Heart right ventricle (tissue), 16 donors: ENCODE measurements at regions of chr7 and their contacts with region 1.

Region 1: DNA sequence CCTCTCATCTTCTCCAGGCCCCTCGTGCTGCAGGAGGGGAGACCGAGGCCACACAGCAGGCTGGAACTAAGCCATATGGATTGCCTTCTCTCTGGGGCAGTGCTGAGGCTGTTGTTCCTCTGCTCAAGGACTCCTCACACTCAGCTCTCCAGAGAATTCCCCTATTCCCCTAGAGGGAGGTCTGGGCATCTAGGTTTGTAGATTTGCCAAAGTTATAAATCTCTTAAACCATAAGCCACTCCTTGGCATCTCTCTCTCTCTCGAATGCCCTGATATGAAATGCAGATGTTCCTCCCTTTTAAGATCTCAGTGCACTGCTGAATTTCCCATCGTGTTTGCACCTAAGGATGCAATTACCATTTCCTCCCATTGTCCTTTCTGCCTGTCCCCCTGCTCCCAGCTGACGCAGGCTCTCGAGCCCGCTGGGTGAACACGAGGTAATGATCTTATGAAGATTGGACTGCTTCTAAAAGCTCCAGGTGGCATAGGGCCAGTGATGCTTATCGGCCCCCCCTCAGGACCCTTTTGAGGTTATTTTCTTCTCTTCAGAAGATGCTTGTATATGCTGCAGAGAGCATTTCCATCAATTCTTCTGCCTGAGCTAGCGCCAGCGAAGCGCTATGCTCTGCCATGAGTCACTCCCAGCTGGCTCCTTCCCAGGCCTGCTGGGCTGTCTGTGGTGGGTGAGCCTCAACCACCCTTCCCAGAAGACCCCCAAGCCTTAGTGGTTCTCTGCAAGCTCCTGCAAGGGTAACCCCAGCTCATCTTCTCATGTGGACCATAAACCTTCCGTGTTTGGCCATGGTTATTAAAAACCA is 41.6 kb upstream of the AQP1 start:
- DNase-seq: peak; percentile 54 to 75
- ATAC-seq: peak; percentile 47 to 82 (median 76)
- H3K4me3 ChIP-seq: no peak overlapping the region
- H3K27ac ChIP-seq: peak overlapping the region in 9 of 10 donors; percentile 39 to 71 (median 62)
- H3K4me1 ChIP-seq: peaks cover 10 to 78% (median 40%) of the 10 kb centered on the region in 9 donors
- H3K27me3 ChIP-seq: no peaks in the 10 kb centered on the region
- CTCF ChIP-seq: no peak

Region 2: GRCh38 chr7:30585675-30586074 is 284.3 kb before region 1 on chr7:
- intact Hi-C with region 1: no loop called
- DNase-seq: no peak
- ATAC-seq: no peak
- H3K4me3 ChIP-seq: no peak overlapping the region
- H3K27ac ChIP-seq: no peak overlapping the region
- H3K4me1 ChIP-seq: peaks cover 0 to 8% (median 0%) of the 10 kb centered on the region in 9 donors
- H3K27me3 ChIP-seq: no peaks in the 10 kb centered on the region
- CTCF ChIP-seq: no peak

Region 3: DNA sequence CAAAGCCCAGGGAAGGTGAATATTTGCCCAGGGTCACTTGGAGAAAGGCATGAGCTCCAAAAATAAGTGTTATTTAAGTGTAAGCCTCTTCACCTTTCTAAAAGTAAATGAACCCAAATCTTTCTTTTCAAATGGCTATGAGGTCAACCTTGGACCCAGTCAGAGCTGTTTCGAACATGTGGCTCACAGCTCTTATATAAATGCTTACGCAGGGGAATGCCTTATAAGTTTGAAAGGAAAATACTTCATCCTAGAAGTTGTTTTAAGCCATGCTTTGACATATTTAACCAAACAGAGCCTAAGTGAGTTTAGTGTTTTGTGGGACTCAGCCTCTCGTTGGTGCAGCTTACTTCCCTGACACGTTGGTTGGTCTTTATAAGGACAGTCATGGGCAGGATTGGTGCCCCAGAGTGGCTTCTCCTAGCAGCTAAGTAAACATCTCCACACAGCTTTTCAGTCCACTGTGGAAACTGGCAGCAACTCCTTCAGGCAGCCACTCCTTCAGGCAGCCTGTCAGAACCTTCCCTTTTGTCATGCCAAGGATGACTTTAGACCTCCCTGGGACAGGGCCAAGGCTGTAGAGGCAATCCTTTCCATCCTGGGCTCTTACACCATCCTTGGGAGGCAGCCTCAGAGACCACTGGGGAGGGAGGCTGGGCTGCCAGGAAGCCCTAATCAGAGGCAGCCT is 55.2 kb before region 1 on chr7:
- intact Hi-C with region 1: loop called in 2 of 10 experiments (anchors 5 to 10 kb)
- DNase-seq: peak in 1 of 2 donors; percentile 25
- ATAC-seq: peak; percentile 4 to 78 (median 24)
- H3K4me3 ChIP-seq: no peak overlapping the region
- H3K27ac ChIP-seq: peak overlapping the region; percentile 24 to 91 (median 81)
- H3K4me1 ChIP-seq: peaks cover 11 to 58% (median 47%) of the 10 kb centered on the region in 9 donors
- H3K27me3 ChIP-seq: no peaks in the 10 kb centered on the region
- CTCF ChIP-seq: no peak

Region 4: DNA sequence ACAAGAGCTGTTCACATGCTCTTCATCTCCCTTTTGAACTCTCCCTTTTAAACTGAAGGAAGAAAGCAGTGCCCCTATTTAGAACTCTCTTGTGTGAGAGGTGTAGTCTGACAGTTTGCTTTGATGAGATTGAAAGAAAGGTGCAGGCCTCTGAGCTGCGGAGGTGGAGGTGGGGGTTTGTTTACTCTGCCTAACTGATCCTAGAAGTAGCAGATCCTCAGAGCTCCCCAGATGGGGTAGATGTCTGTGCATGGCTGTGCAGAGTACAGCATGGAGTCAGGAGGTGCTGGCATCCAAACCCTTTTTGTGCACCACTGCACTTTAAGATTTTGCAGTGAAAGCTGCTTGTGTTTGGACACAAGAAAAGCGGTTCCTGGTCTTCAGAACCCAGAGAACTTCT is 40.5 kb before region 1 on chr7:
- intact Hi-C with region 1: loop called in 1 of 10 experiments (anchors 5 kb)
- DNase-seq: no peak
- ATAC-seq: no peak
- H3K4me3 ChIP-seq: no peak overlapping the region
- H3K27ac ChIP-seq: no peak overlapping the region
- H3K4me1 ChIP-seq: no peaks in the 10 kb centered on the region
- H3K27me3 ChIP-seq: no peaks in the 10 kb centered on the region
- CTCF ChIP-seq: no peak

Region 5: DNA sequence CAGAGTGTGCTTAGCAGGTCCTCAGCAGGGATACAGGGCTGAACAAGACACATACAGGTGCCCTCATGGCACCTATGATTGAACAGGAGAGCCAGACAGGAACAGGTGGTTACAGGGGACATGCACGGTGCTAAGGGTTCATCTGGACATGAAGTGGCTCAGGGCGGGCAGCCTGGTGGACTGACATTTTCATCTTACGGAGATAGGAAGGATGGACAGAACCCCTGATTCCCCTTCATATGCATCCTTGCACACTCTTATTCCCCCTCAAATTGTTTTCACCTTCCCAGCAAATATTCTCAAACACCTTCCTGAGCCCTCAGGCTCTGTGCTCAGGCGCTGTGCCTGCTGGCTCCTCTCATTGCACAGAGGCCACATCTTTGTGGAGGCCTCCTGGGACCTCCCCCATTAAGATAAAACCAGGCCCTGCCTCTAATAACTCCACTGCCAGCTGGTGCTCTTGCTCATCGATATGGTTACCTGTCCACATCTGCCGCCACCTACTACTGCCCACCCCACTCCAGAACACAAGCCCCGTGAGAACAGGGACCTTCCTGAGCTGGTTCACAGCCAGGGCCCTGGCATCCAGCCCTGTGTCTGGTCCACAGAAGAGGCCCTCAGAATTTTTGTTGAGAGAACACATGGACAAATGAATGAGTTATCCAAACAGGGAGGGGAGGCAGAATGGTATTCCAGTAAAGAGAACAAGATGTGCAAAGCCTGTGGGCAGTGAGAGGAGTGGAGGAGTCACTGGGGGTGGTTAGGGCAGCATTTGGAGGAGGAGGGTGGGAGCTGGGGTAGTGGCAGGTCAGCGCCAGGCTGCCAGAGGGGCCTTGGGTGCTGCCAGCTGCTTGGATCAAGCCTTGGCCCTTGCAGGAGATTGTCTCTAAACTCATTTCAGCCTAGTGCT is 27.2 kb before region 1 on chr7:
- intact Hi-C with region 1: no loop called
- DNase-seq: no peak
- ATAC-seq: peak in 2 of 8 donors; percentile 7 to 34
- H3K4me3 ChIP-seq: no peak overlapping the region
- H3K27ac ChIP-seq: peak overlapping the region in 1 of 10 donors; percentile 29
- H3K4me1 ChIP-seq: peaks cover 0 to 59% (median 41%) of the 10 kb centered on the region in 9 donors
- H3K27me3 ChIP-seq: no peaks in the 10 kb centered on the region
- CTCF ChIP-seq: no peak